ENCODE measurements at regions of chr17 and their contacts with region 1.

Region 1: GRCh38 chr17:1298606-1299005 is 19.1 kb downstream of the TRARG1 start:
- DNase-seq: no peak
- ATAC-seq: no peak

Region 2: GRCh38 chr17:1312261-1312870 is 13.8 kb after region 1 on chr17:
- intact Hi-C with region 1: loop called in 1 of 2 experiments (anchors 2 kb)
- DNase-seq: no peak
- ATAC-seq: no peak

Measured in left cardiac atrium (tissue), 4 donors.